IMR-90 (cell line): ENCODE measurements at regions of chr3 and their contacts with region 1.

Region 1: DNA sequence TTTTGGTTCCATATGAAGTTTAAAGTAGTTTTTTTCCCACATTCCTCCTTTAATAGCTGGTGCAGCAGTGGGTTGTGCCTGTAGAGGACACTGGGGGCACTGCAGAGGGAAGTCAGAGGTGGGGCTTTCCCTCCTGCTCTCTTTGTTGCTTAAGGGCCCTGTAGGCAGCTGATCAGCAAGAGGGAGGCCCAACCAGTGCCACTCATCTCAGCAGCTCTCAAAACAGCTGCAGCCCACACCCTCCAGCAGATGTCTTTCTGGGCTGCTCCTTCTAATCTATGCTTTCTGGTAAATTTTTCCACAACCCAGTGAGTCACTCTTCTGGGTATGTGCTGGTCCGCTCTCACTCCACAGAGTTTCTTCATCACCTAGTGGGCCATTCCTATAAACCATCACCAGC is 263.8 kb downstream of the FEZF2 start:
- DNase-seq: peak; percentile 96
- ATAC-seq: peak; percentile 98
- H3K4me3 ChIP-seq: no peak overlapping the region
- H3K27ac ChIP-seq: no peak overlapping the region
- H3K4me1 ChIP-seq: no peaks in the 10 kb centered on the region
- H3K27me3 ChIP-seq: no peaks in the 10 kb centered on the region
- CTCF ChIP-seq: peak; percentile 32
- POLR2A ChIP-seq: no peak
- RAD21 ChIP-seq: no peak

Region 2: GRCh38 chr3:62125413-62125812 is 15.9 kb after region 1 on chr3:
- CTCF ChIA-PET with region 1: interaction called, 4 read pairs
- POLR2A ChIA-PET with region 1: no interaction called
- dilution Hi-C with region 1: no loop called
- in situ Hi-C with region 1: no loop called
- intact Hi-C with region 1: loop called (anchors 2 kb)
- DNase-seq: no peak
- ATAC-seq: no peak
- H3K4me3 ChIP-seq: no peak overlapping the region
- H3K27ac ChIP-seq: no peak overlapping the region
- H3K4me1 ChIP-seq: no peaks in the 10 kb centered on the region
- H3K27me3 ChIP-seq: no peaks in the 10 kb centered on the region
- CTCF ChIP-seq: no peak
- POLR2A ChIP-seq: no peak
- RAD21 ChIP-seq: no peak

Region 3: GRCh38 chr3:62277450-62277849 is 167.9 kb after region 1 on chr3:
- CTCF ChIA-PET with region 1: no interaction called
- POLR2A ChIA-PET with region 1: no interaction called
- dilution Hi-C with region 1: no loop called
- in situ Hi-C with region 1: no loop called
- intact Hi-C with region 1: no loop called
- DNase-seq: no peak
- ATAC-seq: no peak
- H3K4me3 ChIP-seq: no peak overlapping the region
- H3K27ac ChIP-seq: no peak overlapping the region
- H3K4me1 ChIP-seq: no peaks in the 10 kb centered on the region
- H3K27me3 ChIP-seq: no peaks in the 10 kb centered on the region
- CTCF ChIP-seq: no peak
- POLR2A ChIP-seq: no peak
- RAD21 ChIP-seq: no peak